PC-9 (cell line): ENCODE measurements at regions of chr6 and their contacts with region 1.

Region 1: DNA sequence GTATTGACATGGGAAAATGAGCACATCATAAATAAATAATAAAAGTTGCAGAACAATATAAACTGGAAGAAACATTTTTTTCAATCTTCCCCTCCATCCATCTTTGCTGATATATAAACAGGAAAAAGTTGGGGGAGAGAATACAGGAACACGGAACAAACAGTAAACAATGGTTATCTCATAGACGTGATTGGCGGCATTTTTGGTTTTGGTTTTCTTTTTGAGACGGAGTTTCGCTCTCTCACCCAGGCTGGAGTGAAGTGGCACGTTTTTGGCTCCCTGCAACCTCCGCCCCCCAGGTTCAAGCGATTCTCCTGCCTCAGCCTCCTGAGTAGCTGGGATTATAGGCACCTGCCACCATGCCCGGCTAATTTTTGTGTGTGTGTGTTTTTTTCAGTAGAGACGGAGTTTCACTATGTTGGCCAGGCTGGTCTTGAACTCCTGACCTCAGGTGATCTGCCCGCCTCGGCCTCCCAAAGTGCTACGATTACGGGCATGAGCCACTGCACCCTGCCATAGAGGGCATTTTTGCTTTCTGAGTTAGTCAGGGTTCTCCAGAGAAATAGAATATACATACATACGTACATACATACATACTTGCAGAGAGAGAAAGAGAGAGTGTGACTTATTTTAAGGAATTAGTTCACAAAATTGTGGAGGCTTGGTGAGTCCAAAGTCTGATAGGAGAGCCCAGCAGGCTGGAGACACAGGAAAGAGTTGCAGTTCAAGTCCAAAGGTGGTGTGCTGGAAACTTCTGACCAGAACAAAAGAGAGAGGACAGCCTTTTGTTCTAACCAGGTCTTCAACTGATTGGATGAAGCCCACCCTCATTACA is 22.6 kb downstream of the GNL1 start:
- DNase-seq: no peak
- H3K4me3 ChIP-seq: no peak overlapping the region
- H3K27ac ChIP-seq: no peak overlapping the region
- H3K4me1 ChIP-seq: peaks cover 23% of the 10 kb centered on the region
- H3K27me3 ChIP-seq: no peaks in the 10 kb centered on the region
- CTCF ChIP-seq: no peak

Region 2: GRCh38 chr6:30441171-30441570 is 92.5 kb before region 1 on chr6:
- CTCF ChIA-PET with region 1: interaction called, 13 read pairs
- POLR2A ChIA-PET with region 1: no interaction called
- intact Hi-C with region 1: no loop called
- DNase-seq: peak in 1 of 2 experiments; percentile 38
- H3K4me3 ChIP-seq: no peak overlapping the region
- H3K27ac ChIP-seq: no peak overlapping the region
- H3K4me1 ChIP-seq: no peaks in the 10 kb centered on the region
- H3K27me3 ChIP-seq: peaks cover 93% of the 10 kb centered on the region
- CTCF ChIP-seq: no peak

Region 3: GRCh38 chr6:30483677-30484279 is 49.9 kb before region 1 on chr6:
- CTCF ChIA-PET with region 1: interaction called, 9 read pairs
- POLR2A ChIA-PET with region 1: interaction called, 47 read pairs
- intact Hi-C with region 1: no loop called
- DNase-seq: peak; percentile 45 to 56
- H3K4me3 ChIP-seq: no peak overlapping the region
- H3K27ac ChIP-seq: no peak overlapping the region
- H3K4me1 ChIP-seq: no peaks in the 10 kb centered on the region; the same call in 1 of the 2 replicates
- H3K27me3 ChIP-seq: peaks cover 30% of the 10 kb centered on the region
- CTCF ChIP-seq: peak; percentile 74

Region 4: GRCh38 chr6:30489081-30490025 is 44.3 kb before region 1 on chr6 and contains the start of gene HLA-E:
- CTCF ChIA-PET with region 1: interaction called, 9 read pairs
- POLR2A ChIA-PET with region 1: interaction called, 47 read pairs
- intact Hi-C with region 1: loop called (anchors 1 kb)
- DNase-seq: peak; percentile 90 to 97
- H3K4me3 ChIP-seq: peak within 1 kb of the TSS; percentile 93
- H3K27ac ChIP-seq: peak within 1 kb of the TSS; percentile 89
- H3K4me1 ChIP-seq: peaks cover 8% of the 10 kb centered on the region
- H3K27me3 ChIP-seq: no peaks in the 10 kb centered on the region
- CTCF ChIP-seq: no peak
- total RNA-seq, gene HLA-E: 125 and 160 TPM in 2 replicates

Region 5: DNA sequence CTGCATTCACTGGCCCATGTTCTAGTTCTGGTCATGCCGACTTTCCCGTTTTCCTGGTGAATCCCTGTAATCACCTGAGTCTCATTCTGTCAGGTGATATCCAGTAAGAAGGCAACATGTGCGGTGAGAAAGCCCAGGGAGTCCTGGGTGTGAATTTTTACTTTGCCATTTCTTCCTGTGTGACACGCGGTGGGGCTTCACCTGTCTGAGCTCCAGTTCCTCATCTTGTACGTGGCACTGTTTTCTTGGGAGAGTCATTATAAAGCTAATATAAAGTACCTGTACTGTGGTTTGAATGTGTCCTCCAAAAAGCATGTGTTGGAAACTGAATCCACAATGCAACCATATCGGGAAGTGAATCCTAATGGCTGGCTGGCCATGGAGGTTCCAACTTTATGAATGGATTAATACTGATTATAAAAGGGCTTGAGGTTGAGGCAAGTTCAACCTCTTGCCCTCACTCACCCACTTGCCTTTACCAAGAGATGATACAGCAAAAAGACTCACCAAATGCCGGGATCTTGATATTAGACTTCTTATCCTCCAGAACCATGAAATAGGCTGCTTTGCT is 39.3 kb before region 1 on chr6:
- CTCF ChIA-PET with region 1: interaction called, 16 read pairs
- POLR2A ChIA-PET with region 1: no interaction called
- intact Hi-C with region 1: loop called (anchors 1 kb)
- DNase-seq: no peak
- H3K4me3 ChIP-seq: no peak overlapping the region
- H3K27ac ChIP-seq: no peak overlapping the region
- H3K4me1 ChIP-seq: peaks cover 17% of the 10 kb centered on the region
- H3K27me3 ChIP-seq: no peaks in the 10 kb centered on the region
- CTCF ChIP-seq: no peak

Region 6: GRCh38 chr6:30515932-30516753 is 17.5 kb before region 1 on chr6:
- CTCF ChIA-PET with region 1: interaction called, 9 read pairs
- POLR2A ChIA-PET with region 1: interaction called, 13 read pairs
- intact Hi-C with region 1: no loop called
- DNase-seq: peak; percentile 87 to 96
- H3K4me3 ChIP-seq: peak overlapping the region; percentile 58
- H3K27ac ChIP-seq: peak overlapping the region; percentile 96
- H3K4me1 ChIP-seq: peaks cover 15% of the 10 kb centered on the region
- H3K27me3 ChIP-seq: no peaks in the 10 kb centered on the region
- CTCF ChIP-seq: no peak

Region 7: DNA sequence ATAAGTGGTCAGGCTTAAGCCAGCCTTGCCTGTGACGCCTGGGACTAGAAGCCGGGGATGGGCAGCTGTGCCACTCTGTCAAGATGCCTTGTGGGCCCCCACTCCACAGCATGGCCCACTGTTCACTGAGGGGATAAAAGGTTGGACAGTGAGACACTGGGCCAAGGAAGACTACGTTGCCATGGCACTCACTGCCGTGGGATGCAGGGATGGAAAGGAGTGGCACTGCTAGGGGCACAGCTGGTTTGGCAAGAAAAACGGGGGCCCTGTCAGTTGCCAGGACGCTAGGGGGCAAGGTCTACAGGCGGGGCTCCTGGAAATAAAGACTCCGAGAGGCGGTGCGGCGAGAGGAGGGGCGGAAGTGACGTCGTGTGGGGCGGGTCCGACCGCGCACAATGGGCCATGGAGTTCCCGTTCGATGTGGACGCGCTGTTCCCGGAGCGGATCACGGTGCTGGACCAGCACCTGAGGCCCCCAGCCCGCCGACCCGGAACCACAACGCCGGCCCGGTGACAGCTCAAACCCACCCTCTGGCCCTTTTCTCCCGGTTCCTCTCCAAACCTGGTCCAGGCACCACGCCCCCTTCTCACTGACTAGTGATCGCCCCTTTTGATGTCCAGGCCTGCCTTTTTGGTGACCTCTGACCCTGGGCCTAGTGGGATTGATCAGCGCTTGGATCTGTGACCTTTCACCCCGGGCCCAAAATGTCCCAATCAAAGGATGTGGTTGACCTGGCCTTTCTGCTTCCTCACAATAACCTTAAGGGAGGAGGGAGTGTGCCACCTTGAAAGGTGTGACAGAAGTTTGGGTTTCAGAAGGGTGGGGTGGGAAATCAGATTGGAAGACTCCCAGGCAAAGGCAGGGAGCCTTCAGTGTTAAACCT is 93.0 kb after region 1 on chr6 and contains the start of gene ATAT1:
- CTCF ChIA-PET with region 1: no interaction called
- POLR2A ChIA-PET with region 1: no interaction called
- intact Hi-C with region 1: no loop called
- DNase-seq: peak; percentile 75 to 90
- H3K4me3 ChIP-seq: peak within 1 kb of the TSS; percentile 86
- H3K27ac ChIP-seq: peak within 1 kb of the TSS; percentile 66
- H3K4me1 ChIP-seq: no peaks in the 10 kb centered on the region; the same call in 1 of the 2 replicates
- H3K27me3 ChIP-seq: no peaks in the 10 kb centered on the region
- CTCF ChIP-seq: no peak; the same call in 1 of the 2 replicates
- total RNA-seq, gene ATAT1: 15.1 and 29.4 TPM in 2 replicates